CD8-positive, alpha-beta T cell (primary cell): ENCODE measurements at regions of chr1 and their contacts with region 1.

Region 1: GRCh38 chr1:233326811-233327650 is 493 bp upstream of the MAP3K21 start:
- DNase-seq: peak; percentile 70 to 92 (median 86)
- ATAC-seq: peak; percentile 91
- H3K4me3 ChIP-seq: peak overlapping the region; percentile 33 to 42
- H3K4me3 Mint-ChIP-seq: peak overlapping the region; percentile 86
- H3K27ac ChIP-seq: no peak overlapping the region
- H3K27ac Mint-ChIP-seq: peak overlapping the region; percentile 72
- H3K4me1 ChIP-seq: peaks cover 7% of the 10 kb centered on the region
- H3K4me1 Mint-ChIP-seq: peaks cover 15% of the 10 kb centered on the region
- H3K27me3 ChIP-seq: peaks cover 0 to 2% of the 10 kb centered on the region in 2 experiments
- H3K27me3 Mint-ChIP-seq: peaks cover 14% of the 10 kb centered on the region
- CTCF ChIP-seq: no peak

Region 2: GRCh38 chr1:231818337-231818736 is 1508.7 kb before region 1 on chr1:
- CTCF ChIA-PET with region 1: no interaction called
- POLR2A ChIA-PET with region 1: no interaction called
- intact Hi-C with region 1: no loop called
- DNase-seq: no peak
- ATAC-seq: no peak
- H3K4me3 ChIP-seq: no peak overlapping the region
- H3K4me3 Mint-ChIP-seq: no peak overlapping the region
- H3K27ac ChIP-seq: no peak overlapping the region
- H3K27ac Mint-ChIP-seq: no peak overlapping the region
- H3K4me1 ChIP-seq: no peaks in the 10 kb centered on the region
- H3K4me1 Mint-ChIP-seq: no peaks in the 10 kb centered on the region
- H3K27me3 ChIP-seq: no peaks in the 10 kb centered on the region
- H3K27me3 Mint-ChIP-seq: no peaks in the 10 kb centered on the region
- CTCF ChIP-seq: no peak

Region 3: GRCh38 chr1:233295237-233295974 is 31.6 kb before region 1 on chr1 and contains the start of gene PCNX2:
- CTCF ChIA-PET with region 1: no interaction called
- POLR2A ChIA-PET with region 1: interaction called, 5 read pairs
- intact Hi-C with region 1: loop called (anchors 1 to 2 kb)
- DNase-seq: peak; percentile 32 to 82 (median 64)
- ATAC-seq: peak; percentile 85
- H3K4me3 ChIP-seq: peak within 1 kb of the TSS; percentile 65 to 75
- H3K4me3 Mint-ChIP-seq: peak within 1 kb of the TSS; percentile 92
- H3K27ac ChIP-seq: peak within 1 kb of the TSS; percentile 56 to 70
- H3K27ac Mint-ChIP-seq: peak within 1 kb of the TSS; percentile 92
- H3K4me1 ChIP-seq: peaks cover 20% of the 10 kb centered on the region
- H3K4me1 Mint-ChIP-seq: peaks cover 23% of the 10 kb centered on the region
- H3K27me3 ChIP-seq: no peaks in the 10 kb centered on the region
- H3K27me3 Mint-ChIP-seq: no peaks in the 10 kb centered on the region
- CTCF ChIP-seq: no peak
- total RNA-seq, gene PCNX2: 36.4 to 36.7 TPM